ENCODE measurements at regions of chr1 and their contacts with region 1.

Region 1: DNA sequence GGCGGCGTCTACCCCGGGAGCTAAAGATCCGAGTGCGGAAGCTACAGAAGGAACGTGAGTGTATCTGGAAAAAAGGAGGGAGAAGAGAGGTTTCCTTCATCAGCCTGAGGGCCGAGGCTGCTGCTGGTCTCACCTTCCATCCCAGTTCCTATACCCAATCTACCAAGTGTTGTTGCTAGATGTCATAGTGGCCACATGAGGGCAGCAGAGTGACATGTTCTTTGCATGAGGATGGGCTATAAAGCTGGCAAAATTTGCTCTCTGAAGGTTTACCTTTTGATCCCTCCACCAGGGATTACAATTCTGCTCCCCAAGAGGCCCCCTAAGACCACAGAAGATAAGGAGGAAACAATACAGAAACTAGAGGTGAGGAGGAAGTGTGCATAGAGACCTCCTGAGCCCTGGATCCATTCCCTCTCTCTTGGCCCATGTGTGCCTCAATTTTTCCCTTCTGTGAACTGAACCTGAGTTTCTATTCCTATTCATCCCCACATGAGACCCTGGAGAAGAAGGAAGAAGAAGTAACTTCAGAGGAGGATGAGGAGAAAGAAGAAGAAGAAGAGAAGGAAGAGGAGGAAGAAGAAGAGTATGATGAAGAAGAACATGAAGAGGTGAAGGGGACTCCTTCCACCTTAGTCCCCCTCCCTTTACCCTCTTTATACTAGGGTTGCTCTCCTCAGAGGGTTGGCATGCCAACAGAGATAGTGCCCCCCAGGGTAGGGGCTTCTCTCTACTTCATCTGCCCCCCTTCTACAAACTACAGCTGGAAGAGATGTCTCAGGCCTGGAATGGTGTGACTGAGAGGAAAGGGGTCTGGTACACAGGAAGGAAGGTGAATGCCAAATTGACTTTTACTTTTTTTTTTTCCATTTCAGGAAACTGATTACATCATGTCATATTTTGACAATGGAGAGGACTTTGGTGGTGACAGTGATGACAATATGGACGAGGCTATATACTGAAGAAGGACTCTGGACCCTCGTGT is 13.3 kb downstream of the POLR3GL start:
- DNase-seq: peak; percentile 88
- ATAC-seq: peak; percentile 58

Region 2: GRCh38 chr1:145963995-145964901 is 13.5 kb before region 1 on chr1 and contains the starts of genes ANKRD34A and POLR3GL:
- intact Hi-C with region 1: no loop called
- DNase-seq: peak; percentile 97
- ATAC-seq: peak; percentile 90
- total RNA-seq, gene ANKRD34A: 1.2 TPM
- total RNA-seq, gene POLR3GL: 22.3 TPM

Region 3: GRCh38 chr1:146012737-146013403 is 35.1 kb after region 1 on chr1:
- intact Hi-C with region 1: loop called (anchors 2 kb)
- DNase-seq: no peak
- ATAC-seq: peak; percentile 73

Measured in sciatic nerve (tissue), 2 donors.